ENCODE measurements at regions of chr12 and their contacts with region 1.

Region 1: GRCh38 chr12:29455087-29455486 is 42.4 kb downstream of the OVCH1 start:
- DNase-seq: peak in 9 of 10 donors; percentile 31 to 73 (median 47)
- H3K4me3 ChIP-seq: peak overlapping the region in 27 of 59 donors; percentile 0 to 48 (median 20)
- H3K27ac ChIP-seq: peak overlapping the region in 57 of 59 donors; percentile 5 to 97 (median 83)
- H3K27me3 ChIP-seq: no peaks in the 10 kb centered on the region
- CTCF ChIP-seq: peak in 3 of 56 donors; percentile 7 to 20 (median 17)

Region 2: DNA sequence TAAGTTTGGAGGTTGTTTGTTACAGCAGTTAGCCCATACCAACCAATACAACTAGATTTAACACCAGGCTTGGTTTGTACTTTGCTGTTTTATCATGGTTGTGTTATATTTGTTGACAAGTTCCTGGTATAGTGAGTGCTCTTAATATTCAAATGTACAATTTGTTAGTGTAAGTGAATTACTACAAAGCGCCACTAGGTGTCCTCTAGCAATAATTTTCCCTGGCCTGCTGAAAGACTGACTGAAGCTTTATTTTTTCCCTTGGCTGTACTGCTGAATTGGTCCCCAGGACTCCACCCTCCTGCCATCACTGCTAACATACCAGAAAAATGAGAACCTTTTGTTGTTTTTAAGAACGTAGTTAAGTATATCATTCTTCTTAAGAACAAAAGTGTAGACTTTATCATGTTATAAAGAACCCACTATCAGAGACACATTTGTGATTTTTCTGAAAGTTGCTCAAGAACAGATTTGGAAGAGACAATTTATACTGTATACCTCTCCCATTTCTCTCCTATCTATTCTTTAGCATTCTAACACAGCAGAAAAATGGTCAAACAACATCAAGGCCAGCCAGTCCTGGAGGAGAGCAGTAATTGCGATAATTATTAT is 381.4 kb before region 1 on chr12:
- intact Hi-C with region 1: loop called in 1 of 2 experiments (anchors 10 kb)
- DNase-seq: peak in 2 of 10 donors; percentile 9 to 16
- H3K4me3 ChIP-seq: no peak overlapping the region
- H3K27ac ChIP-seq: no peak overlapping the region
- H3K27me3 ChIP-seq: no peaks in the 10 kb centered on the region
- CTCF ChIP-seq: peak; percentile 63 to 95 (median 84)

Region 3: GRCh38 chr12:29380536-29381523 is 74.3 kb before region 1 on chr12 and contains the start of gene ERGIC2:
- intact Hi-C with region 1: loop called (anchors 5 to 10 kb)
- DNase-seq: peak; percentile 68 to 94 (median 88)
- H3K4me3 ChIP-seq: peak within 1 kb of the TSS; percentile 68 to 100 (median 95)
- H3K27ac ChIP-seq: peak within 1 kb of the TSS in 57 of 59 donors; percentile 35 to 95 (median 83)
- H3K27me3 ChIP-seq: no peaks in the 10 kb centered on the region
- CTCF ChIP-seq: peak in 14 of 56 donors; percentile 5 to 38 (median 22)
- total RNA-seq, gene ERGIC2: 37.3 to 95.8 (median 66.5) TPM

Region 4: GRCh38 chr12:29505122-29505521 is 50.0 kb after region 1 on chr12:
- intact Hi-C with region 1: no loop called
- DNase-seq: no peak
- H3K4me3 ChIP-seq: no peak overlapping the region
- H3K27ac ChIP-seq: no peak overlapping the region
- H3K27me3 ChIP-seq: no peaks in the 10 kb centered on the region
- CTCF ChIP-seq: no peak

Measured in dorsolateral prefrontal cortex (tissue), 120 donors.